Activated CD4-positive, alpha-beta memory T cell treated with anti-CD3 and anti-CD28 coated beads for 36 hours (primary cell): ENCODE measurements at regions of chr6 and their contacts with region 1.

Region 1: DNA sequence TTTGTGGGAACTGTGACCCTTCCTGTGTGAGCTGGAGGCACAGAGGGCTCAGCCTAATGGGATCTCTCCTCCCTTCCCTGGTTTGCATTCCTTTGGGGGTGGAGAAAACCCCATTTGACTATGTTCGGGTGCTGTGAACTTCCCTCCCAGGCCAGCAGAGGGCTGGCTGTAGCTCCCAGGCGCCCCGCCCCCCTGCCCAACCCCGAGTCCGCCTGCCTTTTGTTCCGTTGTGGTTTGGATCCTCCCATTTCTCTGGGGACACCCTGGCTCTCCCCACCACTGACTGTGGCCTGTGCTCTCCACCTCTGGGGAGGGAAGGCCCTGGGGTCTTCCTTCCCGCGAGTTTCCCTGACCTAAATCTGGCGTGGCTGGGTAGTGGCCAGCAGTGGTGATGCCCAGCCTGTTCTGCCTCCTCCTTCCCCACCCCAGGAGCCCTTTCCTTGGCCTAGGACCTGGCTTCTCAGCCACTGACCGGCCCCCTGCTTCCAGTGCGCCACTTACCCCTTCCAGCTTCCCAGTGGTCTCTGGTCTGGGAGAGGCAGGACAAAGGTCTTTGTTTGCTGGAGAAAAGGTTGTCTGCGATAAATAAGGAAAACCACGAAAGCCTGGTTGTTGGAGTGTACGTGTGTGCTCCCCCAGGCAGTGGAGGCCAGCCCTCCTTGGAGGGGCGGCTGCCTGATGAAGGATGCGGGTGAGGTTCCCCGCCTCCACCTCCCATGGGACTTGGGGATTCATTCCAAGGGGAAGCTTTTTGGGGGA is 4.9 kb downstream of the VEGFA start:
- DNase-seq: peak; percentile 75
- H3K4me3 Mint-ChIP-seq: no peak overlapping the region
- H3K27ac Mint-ChIP-seq: no peak overlapping the region
- H3K4me1 Mint-ChIP-seq: peaks cover 30% of the 10 kb centered on the region
- H3K27me3 Mint-ChIP-seq: peaks cover 8% of the 10 kb centered on the region

Region 2: DNA sequence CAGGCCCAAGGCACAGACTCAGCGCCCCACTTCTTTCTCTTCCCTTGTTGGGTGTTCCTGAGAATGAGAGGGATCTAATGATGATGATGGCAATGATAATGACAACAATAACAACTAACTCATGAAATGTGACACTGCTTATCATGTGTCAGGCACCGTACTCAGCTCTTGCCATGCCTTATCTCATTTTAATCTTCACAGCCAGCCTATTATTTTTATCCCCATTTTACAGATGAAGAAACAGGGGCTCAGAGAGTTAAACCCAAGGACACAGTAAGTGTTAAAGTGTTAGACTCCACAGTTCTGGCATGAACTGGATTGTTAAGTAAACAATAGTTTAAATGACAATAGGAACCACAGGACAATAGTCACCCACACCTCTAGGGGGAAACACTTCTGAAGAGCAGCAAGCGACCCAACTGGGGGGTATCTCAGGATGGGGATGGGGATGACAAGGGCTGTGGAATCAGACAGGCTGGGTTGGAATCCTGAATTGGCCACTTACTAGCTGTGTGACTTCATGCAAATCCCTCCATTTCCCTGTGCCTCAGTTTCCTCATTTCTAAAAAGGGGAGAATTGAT is 117.6 kb before region 1 on chr6:
- CTCF ChIA-PET with region 1: no interaction called
- POLR2A ChIA-PET with region 1: no interaction called
- intact Hi-C with region 1: no loop called
- DNase-seq: no peak
- H3K4me3 Mint-ChIP-seq: no peak overlapping the region
- H3K27ac Mint-ChIP-seq: no peak overlapping the region
- H3K4me1 Mint-ChIP-seq: peaks cover 2% of the 10 kb centered on the region
- H3K27me3 Mint-ChIP-seq: peaks cover 5% of the 10 kb centered on the region

Region 3: DNA sequence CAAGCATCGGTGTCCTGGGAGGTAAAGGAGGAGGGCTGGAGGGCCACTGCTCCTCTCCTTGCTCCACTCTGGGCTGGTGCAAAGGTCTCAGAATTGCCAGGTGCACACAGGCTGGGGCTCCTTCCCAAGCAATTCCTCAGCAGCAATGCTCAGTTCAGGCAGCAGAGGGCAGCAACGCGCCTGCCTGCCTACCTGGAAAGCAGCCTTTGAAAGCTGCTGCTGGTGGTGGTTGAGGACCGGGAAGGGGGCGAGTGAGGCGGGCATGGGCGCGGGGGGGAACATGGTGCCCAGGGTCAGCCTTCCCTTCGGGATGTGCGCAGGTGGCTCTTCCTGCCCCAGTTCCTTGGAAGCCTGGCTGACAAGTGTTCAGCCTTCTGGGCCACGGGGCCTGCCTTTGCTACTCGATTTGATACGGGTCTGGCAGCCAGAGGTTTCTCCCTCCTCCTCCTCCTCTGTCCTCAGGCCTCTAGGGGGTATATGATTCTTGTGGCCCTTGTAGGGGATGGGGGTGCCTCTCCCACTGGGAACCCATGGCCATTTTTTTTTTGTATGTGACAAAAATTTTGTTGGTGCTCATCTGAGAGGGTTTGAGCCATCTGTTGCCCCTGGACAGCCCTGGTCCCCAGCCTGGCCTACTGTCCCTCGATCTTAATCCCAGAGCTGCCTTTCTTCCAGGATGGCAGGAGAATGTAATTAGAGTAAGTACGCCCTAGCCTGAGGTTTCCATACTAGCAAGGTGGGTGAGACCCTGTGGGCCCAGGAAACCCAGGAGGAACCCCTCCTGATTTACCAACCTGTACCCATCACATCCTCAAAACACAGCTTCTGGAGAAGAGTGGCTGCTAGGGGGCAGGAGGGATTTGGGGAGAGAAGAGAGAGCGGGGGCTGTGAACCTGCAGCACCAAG is 107.5 kb before region 1 on chr6:
- CTCF ChIA-PET with region 1: interaction called, 51 read pairs
- POLR2A ChIA-PET with region 1: interaction called, 7 read pairs
- intact Hi-C with region 1: loop called (anchors 2 kb)
- DNase-seq: peak; percentile 87
- H3K4me3 Mint-ChIP-seq: no peak overlapping the region
- H3K27ac Mint-ChIP-seq: peak overlapping the region; percentile 24
- H3K4me1 Mint-ChIP-seq: peaks cover 43% of the 10 kb centered on the region
- H3K27me3 Mint-ChIP-seq: no peaks in the 10 kb centered on the region

Region 4: GRCh38 chr6:43687437-43688347 is 87.3 kb before region 1 on chr6 and contains the start of gene MRPS18A:
- CTCF ChIA-PET with region 1: interaction called, 10 read pairs
- POLR2A ChIA-PET with region 1: no interaction called
- intact Hi-C with region 1: no loop called
- DNase-seq: peak; percentile 92
- H3K4me3 Mint-ChIP-seq: peak within 1 kb of the TSS; percentile 94
- H3K27ac Mint-ChIP-seq: peak within 1 kb of the TSS; percentile 83
- H3K4me1 Mint-ChIP-seq: peaks cover 45% of the 10 kb centered on the region
- H3K27me3 Mint-ChIP-seq: no peaks in the 10 kb centered on the region
- total RNA-seq, gene MRPS18A: 46.9 to 50.5 TPM

Region 5: GRCh38 chr6:43723737-43724295 is 51.1 kb before region 1 on chr6:
- CTCF ChIA-PET with region 1: interaction called, 26 read pairs
- POLR2A ChIA-PET with region 1: interaction called, 17 read pairs
- intact Hi-C with region 1: loop called (anchors 1 kb)
- DNase-seq: peak; percentile 86
- H3K4me3 Mint-ChIP-seq: no peak overlapping the region
- H3K27ac Mint-ChIP-seq: no peak overlapping the region
- H3K4me1 Mint-ChIP-seq: peaks cover 24% of the 10 kb centered on the region
- H3K27me3 Mint-ChIP-seq: no peaks in the 10 kb centered on the region

Region 6: GRCh38 chr6:43838276-43839036 is 63.5 kb after region 1 on chr6:
- CTCF ChIA-PET with region 1: no interaction called
- POLR2A ChIA-PET with region 1: no interaction called
- intact Hi-C with region 1: loop called (anchors 1 kb)
- DNase-seq: peak; percentile 13
- H3K4me3 Mint-ChIP-seq: no peak overlapping the region
- H3K27ac Mint-ChIP-seq: no peak overlapping the region
- H3K4me1 Mint-ChIP-seq: no peaks in the 10 kb centered on the region
- H3K27me3 Mint-ChIP-seq: no peaks in the 10 kb centered on the region

Region 7: DNA sequence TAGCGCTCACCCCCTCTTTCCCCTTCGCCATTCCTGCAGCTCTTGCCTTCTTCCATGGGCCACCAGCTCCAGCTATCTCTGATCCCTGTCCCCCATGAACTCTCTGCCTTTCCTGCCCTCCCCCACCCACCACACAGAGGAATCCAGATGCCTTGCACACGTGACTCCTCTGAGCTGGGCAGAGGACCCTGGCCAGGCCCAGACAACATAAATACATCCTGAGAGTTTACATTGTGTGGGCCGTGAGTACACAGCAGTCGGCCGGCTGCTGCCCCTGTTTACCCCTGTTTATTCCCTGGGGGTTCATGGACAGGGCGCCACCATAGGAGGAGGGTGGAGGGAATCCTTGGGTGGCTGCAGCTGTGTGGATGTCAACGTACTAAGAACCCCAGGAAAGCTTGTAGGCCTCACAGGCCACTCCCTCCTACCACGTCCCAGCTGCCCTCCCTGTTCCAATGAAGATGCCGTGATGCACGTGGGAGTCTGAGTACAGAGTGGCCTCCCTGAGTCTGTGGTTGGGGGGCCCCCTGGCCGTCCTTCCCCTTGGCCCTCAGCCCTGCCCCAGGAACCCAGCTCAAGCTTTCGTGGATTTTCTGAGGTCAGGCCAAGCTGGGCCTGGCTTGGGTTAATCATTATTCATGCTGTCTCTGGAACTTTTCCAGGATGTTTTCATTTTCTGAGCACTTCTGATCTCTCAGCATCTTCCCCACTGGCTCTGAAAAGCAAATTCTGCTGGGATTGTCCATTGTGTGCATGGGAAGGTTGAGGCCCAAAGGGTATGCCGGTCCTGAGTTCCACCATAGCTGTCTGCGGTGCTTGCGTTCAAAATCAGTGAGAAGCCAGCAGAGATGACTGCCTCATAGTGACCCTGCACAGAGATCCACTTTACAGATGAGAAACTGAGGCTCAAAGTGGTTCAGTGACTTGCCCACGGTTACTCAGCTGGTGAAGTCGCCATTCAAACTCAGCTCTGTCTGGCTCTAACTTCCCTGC is 216.0 kb after region 1 on chr6:
- CTCF ChIA-PET with region 1: no interaction called
- POLR2A ChIA-PET with region 1: no interaction called
- intact Hi-C with region 1: no loop called
- DNase-seq: no peak
- H3K4me3 Mint-ChIP-seq: no peak overlapping the region
- H3K27ac Mint-ChIP-seq: no peak overlapping the region
- H3K4me1 Mint-ChIP-seq: no peaks in the 10 kb centered on the region
- H3K27me3 Mint-ChIP-seq: peaks cover 2% of the 10 kb centered on the region

Region 8: DNA sequence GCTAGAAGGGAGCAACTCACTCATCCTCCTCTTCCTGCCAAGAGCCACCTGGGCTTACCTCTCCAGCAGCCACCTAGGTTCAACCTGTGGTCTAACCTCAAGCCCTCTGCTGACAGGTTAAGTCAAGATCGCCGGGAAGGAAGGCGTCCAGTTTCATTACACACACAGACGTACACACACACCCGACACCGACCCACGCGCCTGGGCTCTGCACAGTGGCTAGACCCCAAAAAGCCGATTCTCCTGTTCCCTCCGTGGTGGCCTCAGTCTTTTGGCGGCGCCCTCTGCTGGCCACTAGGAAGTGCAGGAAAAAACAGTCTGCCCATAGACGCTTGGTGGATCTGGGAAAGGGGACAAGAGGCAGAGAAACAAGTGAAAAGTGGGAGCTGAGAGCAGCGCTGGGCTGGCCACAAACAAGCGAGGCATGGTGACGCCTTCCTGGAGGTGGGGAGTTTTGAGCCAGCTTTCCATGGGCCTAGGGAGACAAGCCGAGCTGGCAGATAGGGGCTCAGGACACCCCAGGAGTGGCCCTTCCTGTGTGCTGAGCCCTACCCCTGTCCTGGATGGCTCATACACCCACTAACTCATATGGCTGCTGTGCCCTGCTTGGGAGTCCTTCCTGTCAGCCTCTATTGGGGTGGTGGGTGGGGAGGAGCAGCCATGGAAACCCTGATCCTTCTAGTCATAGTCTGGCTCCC is 299.6 kb after region 1 on chr6:
- CTCF ChIA-PET with region 1: interaction called, 172 read pairs
- POLR2A ChIA-PET with region 1: interaction called, 27 read pairs
- intact Hi-C with region 1: no loop called
- DNase-seq: peak; percentile 81
- H3K4me3 Mint-ChIP-seq: peak overlapping the region; percentile 81
- H3K27ac Mint-ChIP-seq: peak overlapping the region; percentile 24
- H3K4me1 Mint-ChIP-seq: peaks cover 15% of the 10 kb centered on the region
- H3K27me3 Mint-ChIP-seq: peaks cover 14% of the 10 kb centered on the region

Region 9: GRCh38 chr6:44127186-44128019 is 352.4 kb after region 1 on chr6 and contains the starts of genes MRPL14 and TMEM63B:
- CTCF ChIA-PET with region 1: no interaction called
- POLR2A ChIA-PET with region 1: interaction called, 3 read pairs
- intact Hi-C with region 1: loop called (anchors 2 kb)
- DNase-seq: peak; percentile 93
- H3K4me3 Mint-ChIP-seq: peak within 1 kb of the TSS; percentile 92
- H3K27ac Mint-ChIP-seq: peak within 1 kb of the TSS; percentile 97
- H3K4me1 Mint-ChIP-seq: peaks cover 46% of the 10 kb centered on the region
- H3K27me3 Mint-ChIP-seq: no peaks in the 10 kb centered on the region
- total RNA-seq, gene MRPL14: 49.5 to 50.1 TPM
- total RNA-seq, gene TMEM63B: 11.6 to 13.0 TPM